Activated CD4-positive, alpha-beta T cell treated with anti-CD3 and anti-CD28 coated beads for 36 hours (primary cell): ENCODE measurements at regions of chr12 and their contacts with region 1.

Region 1: DNA sequence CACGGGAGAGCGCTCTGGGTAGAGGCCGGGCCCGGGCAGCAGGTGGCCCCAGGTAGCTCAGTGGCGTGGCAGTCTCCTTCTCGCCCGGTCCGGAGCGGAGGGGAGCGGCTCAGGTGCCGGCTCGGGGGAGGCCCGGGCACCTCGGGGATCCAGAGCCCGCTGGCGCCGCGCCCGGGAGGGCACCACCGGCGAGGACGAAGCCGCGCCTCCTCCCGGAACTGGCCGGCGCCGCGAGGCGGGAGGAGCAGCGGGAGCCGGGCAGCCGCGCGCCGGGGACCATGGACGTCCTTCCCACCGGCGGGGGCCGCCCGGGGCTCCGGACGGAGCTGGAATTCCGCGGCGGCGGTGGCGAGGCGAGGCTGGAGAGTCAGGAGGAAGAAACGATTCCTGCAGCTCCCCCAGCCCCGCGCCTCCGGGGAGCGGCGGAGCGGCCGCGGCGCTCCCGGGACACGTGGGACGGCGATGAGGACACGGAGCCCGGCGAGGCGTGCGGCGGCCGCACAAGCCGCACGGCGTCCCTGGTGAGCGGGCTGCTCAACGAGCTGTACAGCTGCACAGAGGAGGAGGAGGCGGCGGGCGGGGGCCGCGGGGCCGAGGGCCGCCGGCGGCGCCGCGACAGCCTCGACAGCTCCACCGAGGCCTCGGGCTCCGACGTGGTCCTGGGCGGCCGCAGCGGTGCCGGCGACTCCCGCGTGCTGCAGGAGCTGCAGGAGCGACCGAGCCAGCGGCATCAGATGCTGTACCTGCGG is 21.5 kb upstream of the GNS start:
- DNase-seq: peak; percentile 33
- ATAC-seq: peak; percentile 57
- H3K4me3 Mint-ChIP-seq: peak overlapping the region; percentile 62
- H3K27ac Mint-ChIP-seq: no peak overlapping the region
- H3K4me1 Mint-ChIP-seq: peaks cover 16% of the 10 kb centered on the region
- H3K27me3 Mint-ChIP-seq: peaks cover 64% of the 10 kb centered on the region

Region 2: GRCh38 chr12:64747695-64748094 is 33.0 kb before region 1 on chr12:
- CTCF ChIA-PET with region 1: no interaction called
- POLR2A ChIA-PET with region 1: no interaction called
- intact Hi-C with region 1: no loop called
- DNase-seq: no peak
- ATAC-seq: no peak
- H3K4me3 Mint-ChIP-seq: no peak overlapping the region
- H3K27ac Mint-ChIP-seq: no peak overlapping the region
- H3K4me1 Mint-ChIP-seq: peaks cover 3% of the 10 kb centered on the region
- H3K27me3 Mint-ChIP-seq: no peaks in the 10 kb centered on the region

Region 3: GRCh38 chr12:64801381-64801780 is 20.7 kb after region 1 on chr12:
- CTCF ChIA-PET with region 1: interaction called, 35 read pairs
- POLR2A ChIA-PET with region 1: no interaction called
- intact Hi-C with region 1: no loop called
- DNase-seq: no peak
- ATAC-seq: no peak
- H3K4me3 Mint-ChIP-seq: no peak overlapping the region
- H3K27ac Mint-ChIP-seq: no peak overlapping the region
- H3K4me1 Mint-ChIP-seq: no peaks in the 10 kb centered on the region
- H3K27me3 Mint-ChIP-seq: peaks cover 31% of the 10 kb centered on the region

Region 4: GRCh38 chr12:64912516-64913255 is 132.0 kb after region 1 on chr12:
- CTCF ChIA-PET with region 1: no interaction called
- POLR2A ChIA-PET with region 1: no interaction called
- intact Hi-C with region 1: no loop called
- DNase-seq: no peak
- ATAC-seq: no peak
- H3K4me3 Mint-ChIP-seq: no peak overlapping the region
- H3K27ac Mint-ChIP-seq: no peak overlapping the region
- H3K4me1 Mint-ChIP-seq: no peaks in the 10 kb centered on the region
- H3K27me3 Mint-ChIP-seq: peaks cover 6% of the 10 kb centered on the region